Right ventricle myocardium inferior (tissue), 1 donor: ENCODE measurements at regions of chr17 and their contacts with region 1.

Region 1: DNA sequence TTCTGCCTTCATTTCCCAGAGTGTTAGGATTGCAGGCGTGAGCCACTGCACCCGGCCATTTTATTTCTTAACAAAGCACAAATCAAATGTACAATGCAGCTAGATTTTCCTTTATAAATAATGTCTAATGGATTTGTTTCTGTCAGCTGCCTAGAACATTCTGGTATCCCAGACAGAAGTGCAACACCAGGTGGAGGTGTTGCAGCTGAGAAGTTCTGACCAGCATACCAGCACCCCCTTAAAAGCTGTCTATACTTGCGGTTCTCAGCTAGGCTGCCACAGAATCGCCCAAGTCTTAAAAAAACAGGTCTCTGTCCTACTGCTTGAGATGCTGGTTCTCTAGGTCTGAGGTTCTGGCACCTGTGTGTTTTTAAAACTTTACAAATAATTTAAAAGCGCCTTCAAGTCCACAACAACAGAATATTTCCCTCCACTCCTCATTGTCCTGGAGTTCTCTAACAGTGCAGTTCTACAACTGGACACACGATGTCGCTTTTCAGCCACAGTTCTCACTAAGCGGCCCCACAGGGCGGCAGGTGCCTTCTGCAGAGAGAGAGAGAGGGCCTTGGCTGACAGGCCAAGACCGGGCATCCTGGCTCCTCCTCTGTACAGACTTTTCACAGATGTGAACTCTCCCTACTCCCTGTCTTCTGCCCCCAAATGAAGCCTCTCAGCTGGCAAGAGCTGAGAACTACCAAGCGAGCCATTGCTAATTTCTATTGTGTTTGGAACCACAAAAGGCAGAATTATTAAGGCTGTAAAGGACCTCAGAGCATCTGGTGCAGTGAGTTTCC is 32.6 kb upstream of the MEOX1 start:
- DNase-seq: peak; percentile 85
- ATAC-seq: peak; percentile 65

Region 2: GRCh38 chr17:43760254-43760852 is 66.1 kb after region 1 on chr17:
- intact Hi-C with region 1: loop called (anchors 1 kb)
- DNase-seq: peak; percentile 93
- ATAC-seq: peak; percentile 90

Region 3: GRCh38 chr17:43846221-43846712 is 152.0 kb after region 1 on chr17:
- intact Hi-C with region 1: loop called (anchors 10 kb)
- DNase-seq: peak; percentile 90
- ATAC-seq: peak; percentile 97